Panc1 (cell line): ENCODE measurements at regions of chr4 and their contacts with region 1.

Region 1: DNA sequence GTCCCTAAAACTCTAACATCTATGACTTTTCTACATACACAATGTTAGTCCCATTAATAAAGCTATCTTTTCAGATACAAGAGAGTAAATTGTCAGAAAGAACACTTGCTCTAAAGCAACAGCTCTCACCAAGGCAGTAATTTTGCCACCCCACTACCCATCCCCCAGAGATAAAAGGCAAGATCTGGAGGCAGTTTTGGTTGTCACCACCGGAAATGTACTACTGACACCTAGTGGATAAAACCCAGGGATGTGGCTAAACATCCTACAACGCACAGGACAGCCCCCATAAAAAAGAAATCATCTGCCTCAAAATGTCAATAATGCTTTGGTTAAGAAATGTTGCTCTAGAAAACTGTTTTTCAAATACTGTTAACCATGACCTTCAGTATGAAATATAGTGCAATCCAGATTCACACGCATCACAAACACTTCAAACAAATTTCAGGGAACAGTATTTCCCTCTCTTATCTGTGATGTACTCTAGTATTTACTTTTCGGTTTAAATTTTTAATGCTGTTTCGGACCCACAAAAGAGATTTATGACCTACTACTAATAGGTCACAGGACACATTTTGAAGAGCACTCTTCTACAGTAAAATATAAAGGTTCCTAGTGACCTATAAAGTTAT is 5.1 kb downstream of the FBXL5 start:
- DNase-seq: peak; percentile 42
- ATAC-seq: 0 out of 2 replicates have a peak, but pooled peaks have one; percentile 59
- H3K4me3 ChIP-seq: no peak overlapping the region
- H3K27ac ChIP-seq: no peak overlapping the region
- H3K4me1 ChIP-seq: peaks cover 17% of the 10 kb centered on the region
- H3K27me3 ChIP-seq: no peaks in the 10 kb centered on the region
- CTCF ChIP-seq: peak; percentile 77

Region 2: DNA sequence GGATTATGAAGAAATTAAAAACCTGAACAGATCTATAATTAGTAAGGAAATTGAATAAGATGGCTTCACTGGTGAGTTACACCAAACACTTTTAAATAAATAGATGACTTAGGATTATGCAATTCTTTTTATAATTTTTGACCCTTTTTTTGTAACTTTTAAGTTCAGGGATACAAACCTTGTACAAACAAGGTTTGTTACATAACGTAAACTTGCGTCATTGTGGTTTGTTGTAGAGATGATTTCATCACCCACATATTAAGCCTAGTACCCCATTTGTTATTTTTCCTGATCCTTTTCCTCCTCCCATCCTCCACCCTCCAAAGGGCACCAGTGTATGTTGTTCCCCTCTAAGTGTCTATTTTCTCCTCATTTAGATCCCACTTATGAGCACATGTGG is 572.1 kb before region 1 on chr4:
- CTCF ChIA-PET with region 1: no interaction called
- POLR2A ChIA-PET with region 1: no interaction called
- in situ Hi-C with region 1: no loop called
- intact Hi-C with region 1: no loop called
- DNase-seq: no peak
- ATAC-seq: no peak
- H3K4me3 ChIP-seq: no peak overlapping the region
- H3K27ac ChIP-seq: no peak overlapping the region
- H3K4me1 ChIP-seq: no peaks in the 10 kb centered on the region
- H3K27me3 ChIP-seq: no peaks in the 10 kb centered on the region
- CTCF ChIP-seq: no peak

Region 3: GRCh38 chr4:15479089-15479912 is 170.7 kb before region 1 on chr4:
- CTCF ChIA-PET with region 1: no interaction called
- POLR2A ChIA-PET with region 1: no interaction called
- in situ Hi-C with region 1: no loop called
- intact Hi-C with region 1: loop called (anchors 1 kb)
- DNase-seq: peak; percentile 68
- ATAC-seq: peak; percentile 95
- H3K4me3 ChIP-seq: peak overlapping the region; percentile 45 to 67
- H3K27ac ChIP-seq: peak overlapping the region; percentile 69
- H3K4me1 ChIP-seq: no peaks in the 10 kb centered on the region
- H3K27me3 ChIP-seq: no peaks in the 10 kb centered on the region
- CTCF ChIP-seq: peak; percentile 66